ENCODE measurements at regions of chr11 and their contacts with region 1.

Region 1: GRCh38 chr11:65117216-65118096 is at the start of gene ZNHIT2:
- DNase-seq: peak; percentile 100
- H3K4me3 Mint-ChIP-seq: peak within 1 kb of the TSS; percentile 90
- H3K27ac Mint-ChIP-seq: peak within 1 kb of the TSS; percentile 95
- H3K4me1 Mint-ChIP-seq: peaks cover 39% of the 10 kb centered on the region
- H3K27me3 Mint-ChIP-seq: no peaks in the 10 kb centered on the region
- total RNA-seq, gene ZNHIT2: 17.1 and 18.1 TPM in 2 replicates

Region 2: GRCh38 chr11:64916775-64917662 is 200.4 kb before region 1 on chr11 and contains the start of gene ATG2A:
- intact Hi-C with region 1: loop called (anchors 1 kb)
- DNase-seq: peak; percentile 100
- H3K4me3 Mint-ChIP-seq: peak within 1 kb of the TSS; percentile 90
- H3K27ac Mint-ChIP-seq: peak within 1 kb of the TSS; percentile 92
- H3K4me1 Mint-ChIP-seq: peaks cover 23% of the 10 kb centered on the region
- H3K27me3 Mint-ChIP-seq: no peaks in the 10 kb centered on the region
- total RNA-seq, gene ATG2A: 22.5 and 23.1 TPM in 2 replicates

Region 3: GRCh38 chr11:64960719-64961118 is 156.7 kb before region 1 on chr11:
- intact Hi-C with region 1: no loop called
- DNase-seq: no peak
- H3K4me3 Mint-ChIP-seq: no peak overlapping the region
- H3K27ac Mint-ChIP-seq: no peak overlapping the region
- H3K4me1 Mint-ChIP-seq: peaks cover 7% of the 10 kb centered on the region
- H3K27me3 Mint-ChIP-seq: peaks cover 6% of the 10 kb centered on the region

Region 4: GRCh38 chr11:65040847-65041621 is 76.4 kb before region 1 on chr11 and contains the start of gene SAC3D1:
- intact Hi-C with region 1: loop called (anchors 2 kb)
- DNase-seq: peak; percentile 98
- H3K4me3 Mint-ChIP-seq: peak within 1 kb of the TSS; percentile 93
- H3K27ac Mint-ChIP-seq: peak within 1 kb of the TSS; percentile 95
- H3K4me1 Mint-ChIP-seq: peaks cover 20% of the 10 kb centered on the region
- H3K27me3 Mint-ChIP-seq: no peaks in the 10 kb centered on the region
- total RNA-seq, gene SAC3D1: 16.3 and 18.0 TPM in 2 replicates

Region 5: GRCh38 chr11:65095974-65096806 is 21.3 kb before region 1 on chr11 and contains the start of gene VPS51:
- intact Hi-C with region 1: loop called (anchors 1 kb)
- DNase-seq: peak; percentile 95
- H3K4me3 Mint-ChIP-seq: peak within 1 kb of the TSS; percentile 95
- H3K27ac Mint-ChIP-seq: peak within 1 kb of the TSS; percentile 94
- H3K4me1 Mint-ChIP-seq: peaks cover 14% of the 10 kb centered on the region
- H3K27me3 Mint-ChIP-seq: no peaks in the 10 kb centered on the region
- total RNA-seq, gene VPS51: 127 and 136 TPM in 2 replicates

Region 6: DNA sequence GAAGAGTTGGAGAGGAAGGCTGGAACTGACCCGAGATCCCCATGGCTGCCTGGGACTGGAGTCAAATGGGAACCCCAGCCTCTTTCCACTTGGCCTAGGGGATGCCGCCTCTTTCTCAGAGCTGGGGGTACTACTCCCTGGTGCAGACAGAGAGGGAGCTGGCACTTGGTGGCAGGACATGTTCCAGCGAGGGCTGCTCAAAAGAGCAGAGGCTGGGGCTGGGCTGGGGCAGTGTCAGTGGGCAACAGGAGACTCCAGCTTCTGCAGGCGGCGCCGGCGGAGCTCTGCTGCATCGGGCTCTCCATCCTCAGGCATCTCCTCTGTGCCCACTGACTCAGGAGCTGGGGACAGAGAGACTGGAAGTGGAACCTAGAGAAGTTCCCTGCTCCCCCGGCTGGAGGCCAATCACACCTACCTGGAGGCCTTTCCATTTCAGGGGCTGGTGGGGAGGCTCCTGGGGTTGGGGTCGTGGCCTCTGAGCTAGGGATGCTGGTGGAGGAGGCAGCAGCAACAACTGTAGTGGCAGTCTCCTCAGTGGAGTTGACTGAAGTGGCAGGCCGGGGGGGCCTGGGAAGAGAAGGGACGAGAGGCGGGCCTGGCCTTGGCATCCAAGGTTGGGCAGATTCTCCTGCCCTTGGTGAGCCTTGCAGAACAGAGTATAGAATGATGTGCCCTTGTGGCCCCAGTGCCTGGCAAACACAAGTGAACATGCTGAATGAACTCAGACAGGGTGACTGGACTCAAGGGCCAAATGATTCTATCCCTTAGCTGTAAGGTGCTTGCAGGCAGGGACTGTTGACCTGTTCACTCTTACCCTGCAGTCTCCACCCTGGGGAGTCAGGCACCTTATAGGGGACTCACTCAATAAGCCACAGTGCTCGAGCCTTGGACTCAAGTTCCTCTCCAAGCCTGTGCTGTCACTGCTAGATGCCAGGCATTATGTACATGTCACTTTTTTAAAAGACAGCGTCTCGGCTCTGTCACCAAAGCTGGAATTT is 11.0 kb after region 1 on chr11:
- intact Hi-C with region 1: no loop called
- DNase-seq: peak; percentile 55
- H3K4me3 Mint-ChIP-seq: no peak overlapping the region
- H3K27ac Mint-ChIP-seq: no peak overlapping the region
- H3K4me1 Mint-ChIP-seq: peaks cover 20% of the 10 kb centered on the region
- H3K27me3 Mint-ChIP-seq: no peaks in the 10 kb centered on the region

Region 7: DNA sequence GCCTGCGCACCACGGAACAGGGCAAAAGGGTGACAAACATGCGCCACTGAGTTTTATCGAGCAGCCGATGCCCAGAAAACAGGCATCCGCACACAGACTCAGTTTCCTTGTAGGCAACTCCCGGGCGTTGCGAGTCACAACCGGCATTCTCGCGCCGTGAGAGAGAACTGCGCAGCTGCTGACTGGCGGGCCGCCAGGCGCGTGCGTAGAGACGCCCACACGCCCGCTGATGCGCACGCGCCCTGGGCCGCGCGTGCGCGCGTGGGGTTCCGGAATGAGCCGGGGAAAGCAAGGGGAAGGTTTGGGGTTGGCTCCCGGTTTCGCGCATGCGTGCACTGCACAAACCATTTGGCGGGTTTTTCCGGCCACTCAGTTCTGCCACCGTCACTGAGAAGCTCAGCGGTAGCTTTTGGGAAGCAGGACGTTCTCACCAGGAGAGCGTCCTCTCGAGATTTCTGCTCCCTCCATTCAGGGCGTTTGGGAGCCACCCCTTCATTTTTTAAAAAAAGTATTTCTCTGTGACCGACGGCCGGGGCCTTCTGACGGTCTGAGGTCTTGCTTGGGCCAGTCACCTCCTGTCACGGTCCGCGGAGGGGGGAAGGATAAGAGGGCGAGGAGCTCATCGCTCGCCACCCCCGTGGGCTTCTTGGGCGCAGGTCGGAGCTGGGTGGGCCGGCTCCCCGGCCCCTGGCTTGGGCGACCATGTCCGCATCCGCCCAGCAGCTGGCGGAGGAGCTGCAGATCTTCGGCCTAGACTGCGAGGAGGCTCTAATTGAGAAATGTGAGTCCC is 144.3 kb after region 1 on chr11 and contains the start of gene POLA2:
- intact Hi-C with region 1: loop called (anchors 1 kb)
- DNase-seq: peak; percentile 99
- H3K4me3 Mint-ChIP-seq: peak within 1 kb of the TSS; percentile 95
- H3K27ac Mint-ChIP-seq: peak within 1 kb of the TSS; percentile 99
- H3K4me1 Mint-ChIP-seq: peaks cover 48% of the 10 kb centered on the region
- H3K27me3 Mint-ChIP-seq: peaks cover 4% of the 10 kb centered on the region
- total RNA-seq, gene POLA2: 77.4 and 82.8 TPM in 2 replicates

Measured in activated CD4-positive, alpha-beta T cell treated with anti-CD3 and anti-CD28 coated beads, Interleukin-2, amount 10 ng/mL, durations not matched to agents 24 days and 14 days (primary cell).